ENCODE measurements at regions of chr17 and their contacts with region 1.

Region 1: GRCh38 chr17:43367737-43368242 is 31.0 kb upstream of the ARL4D start:
- DNase-seq: peak; percentile 57
- H3K4me3 Mint-ChIP-seq: peak overlapping the region; percentile 86
- H3K27ac Mint-ChIP-seq: peak overlapping the region; percentile 99
- H3K4me1 Mint-ChIP-seq: peaks cover 52% of the 10 kb centered on the region
- H3K27me3 Mint-ChIP-seq: no peaks in the 10 kb centered on the region

Region 2: GRCh38 chr17:43125133-43125966 is 242.4 kb before region 1 on chr17 and contains the start of gene BRCA1:
- CTCF ChIA-PET with region 1: no interaction called
- POLR2A ChIA-PET with region 1: interaction called, 11 read pairs
- DNase-seq: peak; percentile 96
- H3K4me3 Mint-ChIP-seq: peak within 1 kb of the TSS; percentile 100
- H3K27ac Mint-ChIP-seq: peak within 1 kb of the TSS; percentile 91
- H3K4me1 Mint-ChIP-seq: peaks cover 38% of the 10 kb centered on the region
- H3K27me3 Mint-ChIP-seq: no peaks in the 10 kb centered on the region
- total RNA-seq, gene BRCA1: 62.5 to 66.5 TPM

Region 3: DNA sequence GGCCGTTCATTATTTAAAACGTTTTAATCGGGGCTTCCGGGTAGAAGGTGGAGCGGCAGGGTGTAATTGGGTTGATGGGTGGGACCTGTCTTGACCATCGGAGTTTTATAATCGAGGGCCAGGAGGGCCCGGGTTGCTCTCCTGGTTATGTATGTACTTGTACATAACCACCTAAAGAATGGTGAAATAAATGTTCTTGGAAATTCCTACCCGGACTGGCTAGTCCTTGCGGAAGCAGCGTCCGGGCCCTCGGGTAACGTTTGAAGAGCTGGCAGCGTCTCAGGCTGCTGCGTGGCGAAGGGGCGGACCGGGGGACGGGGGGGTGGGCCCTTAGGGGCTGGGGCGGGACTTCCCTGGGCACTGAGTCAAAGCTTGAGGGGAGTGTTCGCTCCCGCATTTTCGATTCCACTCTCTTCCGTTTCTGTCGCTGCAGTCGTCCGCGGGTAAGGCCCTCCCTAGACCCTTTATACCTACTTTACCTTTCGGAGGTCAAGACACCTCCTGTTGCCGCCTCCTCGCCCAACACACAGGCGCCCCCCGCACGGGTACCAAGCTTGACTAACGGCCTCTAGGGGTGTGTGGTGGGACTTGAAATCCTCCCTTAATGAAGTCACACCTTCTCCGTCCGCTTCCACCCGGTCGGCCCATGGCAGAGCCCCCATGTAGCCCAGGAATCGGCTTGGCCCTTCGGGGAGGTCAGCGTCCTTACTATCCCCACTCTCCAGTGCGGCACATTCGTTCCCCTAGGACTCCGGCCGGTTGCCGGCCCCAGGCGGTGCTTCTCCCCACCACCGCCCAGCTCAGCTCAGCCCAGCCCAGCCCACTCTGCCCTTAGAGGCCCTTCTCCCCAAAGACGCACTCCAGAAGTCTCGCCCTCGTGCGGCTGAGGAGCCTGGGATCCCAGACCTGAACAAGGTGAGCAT is 156.0 kb before region 1 on chr17 and contains the start of gene TMEM106A:
- CTCF ChIA-PET with region 1: no interaction called
- POLR2A ChIA-PET with region 1: interaction called, 19 read pairs
- DNase-seq: peak; percentile 80
- H3K4me3 Mint-ChIP-seq: peak within 1 kb of the TSS; percentile 81
- H3K27ac Mint-ChIP-seq: peak within 1 kb of the TSS; percentile 82
- H3K4me1 Mint-ChIP-seq: peaks cover 31% of the 10 kb centered on the region
- H3K27me3 Mint-ChIP-seq: no peaks in the 10 kb centered on the region
- total RNA-seq, gene TMEM106A: 12.9 to 13.8 TPM

Region 4: DNA sequence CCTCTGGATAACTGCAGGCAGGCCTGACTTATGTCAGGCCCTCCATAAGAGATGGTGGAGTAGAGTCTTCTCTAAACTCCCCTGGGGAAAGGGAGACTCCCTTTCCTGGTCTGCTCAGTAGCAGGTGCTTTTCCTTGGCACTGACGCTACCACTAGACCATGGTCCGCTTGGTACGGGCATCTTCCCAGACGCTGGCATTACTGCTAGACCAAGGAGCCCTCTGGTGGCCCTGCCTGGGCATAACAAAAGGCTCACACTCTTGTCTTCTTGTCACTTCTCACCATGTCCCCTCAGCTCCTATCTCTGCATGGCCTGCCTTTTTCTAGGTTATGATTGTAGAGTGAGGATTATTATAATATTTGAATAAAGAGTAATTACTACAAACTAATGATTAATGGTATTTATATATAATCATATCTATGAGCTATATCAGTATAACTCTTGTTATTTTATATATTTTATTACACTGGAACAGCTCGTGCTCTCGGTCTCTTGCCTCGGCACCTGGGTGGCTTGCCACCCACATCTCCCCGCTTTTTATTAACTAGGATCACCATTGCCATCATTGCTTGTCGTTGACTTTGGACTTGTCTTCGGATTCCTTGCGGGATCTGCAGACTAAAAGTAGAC is 28.8 kb before region 1 on chr17:
- CTCF ChIA-PET with region 1: interaction called, 6 read pairs
- POLR2A ChIA-PET with region 1: interaction called, 35 read pairs
- DNase-seq: peak; percentile 63
- H3K4me3 Mint-ChIP-seq: no peak overlapping the region
- H3K27ac Mint-ChIP-seq: no peak overlapping the region
- H3K4me1 Mint-ChIP-seq: peaks cover 12% of the 10 kb centered on the region
- H3K27me3 Mint-ChIP-seq: no peaks in the 10 kb centered on the region

Region 5: GRCh38 chr17:43388359-43389045 is 20.7 kb after region 1 on chr17:
- CTCF ChIA-PET with region 1: interaction called, 36 read pairs
- POLR2A ChIA-PET with region 1: interaction called, 903 read pairs
- DNase-seq: peak; percentile 93
- H3K4me3 Mint-ChIP-seq: peak overlapping the region; percentile 85
- H3K27ac Mint-ChIP-seq: peak overlapping the region; percentile 98
- H3K4me1 Mint-ChIP-seq: peaks cover 18% of the 10 kb centered on the region
- H3K27me3 Mint-ChIP-seq: no peaks in the 10 kb centered on the region

Region 6: GRCh38 chr17:43444223-43445008 is 76.6 kb after region 1 on chr17:
- CTCF ChIA-PET with region 1: no interaction called
- POLR2A ChIA-PET with region 1: no interaction called
- DNase-seq: no peak
- H3K4me3 Mint-ChIP-seq: no peak overlapping the region
- H3K27ac Mint-ChIP-seq: no peak overlapping the region
- H3K4me1 Mint-ChIP-seq: no peaks in the 10 kb centered on the region
- H3K27me3 Mint-ChIP-seq: peaks cover 6% of the 10 kb centered on the region

Region 7: GRCh38 chr17:43483674-43484372 is 116.0 kb after region 1 on chr17 and contains the start of gene DHX8:
- CTCF ChIA-PET with region 1: interaction called, 39 read pairs
- POLR2A ChIA-PET with region 1: interaction called, 154 read pairs
- DNase-seq: peak; percentile 99
- H3K4me3 Mint-ChIP-seq: peak within 1 kb of the TSS; percentile 100
- H3K27ac Mint-ChIP-seq: peak within 1 kb of the TSS; percentile 98
- H3K4me1 Mint-ChIP-seq: peaks cover 26% of the 10 kb centered on the region
- H3K27me3 Mint-ChIP-seq: no peaks in the 10 kb centered on the region
- total RNA-seq, gene DHX8: 59.8 to 61.3 TPM

Region 8: GRCh38 chr17:43814714-43815113 is 446.9 kb after region 1 on chr17:
- CTCF ChIA-PET with region 1: no interaction called
- POLR2A ChIA-PET with region 1: no interaction called
- DNase-seq: no peak
- H3K4me3 Mint-ChIP-seq: no peak overlapping the region
- H3K27ac Mint-ChIP-seq: no peak overlapping the region
- H3K4me1 Mint-ChIP-seq: no peaks in the 10 kb centered on the region
- H3K27me3 Mint-ChIP-seq: peaks cover 6% of the 10 kb centered on the region

Measured in activated CD4-positive, alpha-beta memory T cell treated with anti-CD3 and anti-CD28 coated beads, Interleukin-2, amount 10 ng/mL, durations not matched to agents 7 days and 5 days (primary cell).